Activated B cell treated with CpG ODN at 0.5 μM for 24 hours (primary cell): ENCODE measurements at regions of chr12 and their contacts with region 1.

Region 1: DNA sequence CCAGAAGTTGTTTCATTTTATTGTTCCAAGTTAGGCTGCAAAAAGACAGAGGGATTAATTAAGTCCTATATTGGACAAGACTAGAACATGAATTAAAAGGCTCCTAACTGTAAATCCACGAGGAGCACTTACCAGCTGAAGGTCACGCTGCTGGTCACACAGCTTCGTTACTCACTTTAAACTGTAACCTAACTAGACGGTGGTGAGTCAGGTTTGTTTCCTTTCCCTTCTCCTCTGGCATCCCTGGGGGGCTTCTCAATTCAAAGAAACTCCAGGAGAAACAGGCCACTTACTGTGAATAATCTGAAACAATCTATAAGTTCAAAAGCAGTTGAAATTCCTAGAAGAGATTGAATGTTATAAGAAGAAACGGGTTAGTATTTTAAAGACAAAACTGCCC is 331.4 kb downstream of the BCAT1 start:
- DNase-seq: no peak
- ATAC-seq: peak; percentile 25
- H3K4me3 Mint-ChIP-seq: no peak overlapping the region
- H3K27ac Mint-ChIP-seq: no peak overlapping the region
- H3K4me1 Mint-ChIP-seq: peaks cover 6% of the 10 kb centered on the region
- H3K27me3 Mint-ChIP-seq: no peaks in the 10 kb centered on the region
- CTCF ChIP-seq: no peak

Region 2: GRCh38 chr12:22856178-22856577 is 1761.3 kb before region 1 on chr12:
- CTCF ChIA-PET with region 1: no interaction called
- POLR2A ChIA-PET with region 1: no interaction called
- intact Hi-C with region 1: loop called (anchors 10 kb)
- DNase-seq: no peak
- ATAC-seq: no peak
- H3K4me3 Mint-ChIP-seq: no peak overlapping the region
- H3K27ac Mint-ChIP-seq: no peak overlapping the region
- H3K4me1 Mint-ChIP-seq: no peaks in the 10 kb centered on the region
- H3K27me3 Mint-ChIP-seq: peaks cover 5% of the 10 kb centered on the region
- CTCF ChIP-seq: no peak

Region 3: GRCh38 chr12:24630446-24630845 is 13.0 kb after region 1 on chr12:
- CTCF ChIA-PET with region 1: no interaction called
- POLR2A ChIA-PET with region 1: no interaction called
- intact Hi-C with region 1: loop called (anchors 2 kb)
- DNase-seq: no peak
- ATAC-seq: no peak
- H3K4me3 Mint-ChIP-seq: no peak overlapping the region
- H3K27ac Mint-ChIP-seq: no peak overlapping the region
- H3K4me1 Mint-ChIP-seq: peaks cover 3% of the 10 kb centered on the region
- H3K27me3 Mint-ChIP-seq: peaks cover 2% of the 10 kb centered on the region
- CTCF ChIP-seq: no peak